Natural killer cell (primary cell): ENCODE measurements at regions of chr12 and their contacts with region 1.

Region 1: DNA sequence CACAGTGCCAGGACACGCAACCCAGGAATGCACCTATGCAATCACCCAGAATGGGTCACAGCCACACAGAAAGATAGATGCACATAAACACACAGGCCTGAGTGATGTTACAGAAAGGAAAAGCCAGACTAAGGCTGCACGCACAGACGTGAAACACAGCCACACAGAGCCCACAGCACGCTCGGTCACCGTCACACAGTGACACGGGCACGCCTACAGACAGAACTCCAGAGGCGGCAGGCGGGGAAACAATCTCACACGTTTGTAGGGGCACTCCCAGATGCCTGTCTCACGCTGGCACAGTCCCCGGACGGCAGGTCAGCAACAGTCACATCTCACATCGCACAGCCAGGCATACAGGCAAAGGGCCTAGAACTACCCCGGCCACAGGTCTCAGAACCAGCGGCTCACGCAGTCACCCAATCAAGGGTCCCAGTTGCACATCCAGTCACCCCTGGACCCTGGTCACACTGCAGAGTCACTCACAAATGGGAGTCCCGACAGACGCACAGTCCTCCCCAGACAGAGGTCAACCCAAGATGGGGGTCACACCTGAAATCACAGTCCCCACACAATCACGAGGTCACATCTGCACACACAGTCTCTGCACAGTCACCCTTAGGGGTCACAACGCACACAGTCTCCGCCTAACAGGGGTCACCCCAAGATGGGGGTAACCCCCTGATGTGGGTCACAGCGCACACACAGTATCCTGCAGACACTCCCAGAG is 790 bp downstream of the SSH1 start:
- DNase-seq: peak; percentile 70 to 88
- ATAC-seq: peak; percentile 64 to 79 (median 66)
- H3K4me3 ChIP-seq: peak overlapping the region; percentile 73
- H3K4me3 Mint-ChIP-seq: peak overlapping the region; percentile 94
- H3K27ac ChIP-seq: peak overlapping the region; percentile 75
- H3K27ac Mint-ChIP-seq: peak overlapping the region; percentile 96
- H3K4me1 ChIP-seq: peaks cover 40% of the 10 kb centered on the region
- H3K4me1 Mint-ChIP-seq: peaks cover 49 to 54% of the 10 kb centered on the region in 2 donors
- H3K27me3 ChIP-seq: no peaks in the 10 kb centered on the region
- H3K27me3 Mint-ChIP-seq: no peaks in the 10 kb centered on the region
- CTCF ChIP-seq: no peak

Region 2: GRCh38 chr12:108618079-108618952 is 238.3 kb before region 1 on chr12:
- intact Hi-C with region 1: no loop called
- DNase-seq: peak; percentile 76 to 89
- ATAC-seq: peak; percentile 39 to 65 (median 45)
- H3K4me3 ChIP-seq: no peak overlapping the region
- H3K4me3 Mint-ChIP-seq: peak overlapping the region; percentile 56
- H3K27ac ChIP-seq: peak overlapping the region; percentile 79
- H3K27ac Mint-ChIP-seq: peak overlapping the region; percentile 92 to 100
- H3K4me1 ChIP-seq: peaks cover 56% of the 10 kb centered on the region
- H3K4me1 Mint-ChIP-seq: peaks cover 68 to 70% of the 10 kb centered on the region in 2 donors
- H3K27me3 ChIP-seq: no peaks in the 10 kb centered on the region
- H3K27me3 Mint-ChIP-seq: no peaks in the 10 kb centered on the region
- CTCF ChIP-seq: peak; percentile 98

Region 3: GRCh38 chr12:108653082-108653516 is 203.5 kb before region 1 on chr12:
- intact Hi-C with region 1: no loop called
- DNase-seq: no peak
- ATAC-seq: no peak
- H3K4me3 ChIP-seq: no peak overlapping the region
- H3K4me3 Mint-ChIP-seq: no peak overlapping the region
- H3K27ac ChIP-seq: no peak overlapping the region
- H3K27ac Mint-ChIP-seq: no peak overlapping the region
- H3K4me1 ChIP-seq: no peaks in the 10 kb centered on the region
- H3K4me1 Mint-ChIP-seq: peaks cover 0 to under 1% of the 10 kb centered on the region in 2 donors
- H3K27me3 ChIP-seq: no peaks in the 10 kb centered on the region
- H3K27me3 Mint-ChIP-seq: no peaks in the 10 kb centered on the region
- CTCF ChIP-seq: no peak

Region 4: DNA sequence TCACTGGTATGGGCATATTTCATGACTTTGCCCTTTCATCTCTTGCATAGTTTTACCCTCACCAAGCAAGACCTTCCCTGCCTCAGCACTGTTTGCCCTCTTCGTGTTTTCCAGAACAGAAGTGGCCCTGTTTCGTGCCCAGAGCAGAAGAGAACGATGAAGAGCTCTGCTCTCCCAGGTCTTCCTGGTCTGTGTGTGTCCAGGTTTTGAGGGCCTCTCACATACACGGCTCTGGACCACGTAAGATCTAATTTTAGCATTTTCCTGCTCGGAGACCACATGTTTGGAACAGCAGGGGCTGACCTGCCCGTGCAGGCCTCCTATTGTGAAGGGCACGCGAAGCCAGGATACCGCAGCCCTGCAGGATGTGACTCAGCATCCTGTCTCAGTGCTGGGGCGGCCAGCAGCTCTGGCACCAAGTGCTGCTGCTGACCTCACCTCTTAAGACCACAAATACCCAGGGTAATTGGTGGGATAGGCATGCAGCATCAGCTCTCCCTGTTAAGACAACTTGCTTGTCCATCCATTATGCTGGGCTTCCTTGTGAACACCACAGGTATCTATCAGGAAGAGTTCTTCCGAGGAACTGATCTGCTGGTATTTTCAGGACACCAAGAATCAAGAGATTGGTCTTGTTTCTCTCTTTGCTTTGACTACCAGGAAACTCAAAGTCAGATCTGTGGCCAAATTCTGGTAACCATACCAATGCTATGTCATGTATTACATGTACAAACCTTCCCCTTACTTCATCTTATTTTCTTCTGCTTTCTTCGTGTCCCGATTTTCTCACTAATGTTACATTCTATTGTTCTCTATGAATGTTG is 18.2 kb before region 1 on chr12:
- intact Hi-C with region 1: loop called (anchors 2 kb)
- DNase-seq: peak; percentile 81 to 83
- ATAC-seq: peak; percentile 91 to 97 (median 96)
- H3K4me3 ChIP-seq: no peak overlapping the region
- H3K4me3 Mint-ChIP-seq: peak overlapping the region; percentile 80
- H3K27ac ChIP-seq: peak overlapping the region; percentile 90
- H3K27ac Mint-ChIP-seq: peak overlapping the region; percentile 98 to 99
- H3K4me1 ChIP-seq: peaks cover 39% of the 10 kb centered on the region
- H3K4me1 Mint-ChIP-seq: peaks cover 74 to 75% of the 10 kb centered on the region in 2 donors
- H3K27me3 ChIP-seq: no peaks in the 10 kb centered on the region
- H3K27me3 Mint-ChIP-seq: no peaks in the 10 kb centered on the region
- CTCF ChIP-seq: no peak

Region 5: DNA sequence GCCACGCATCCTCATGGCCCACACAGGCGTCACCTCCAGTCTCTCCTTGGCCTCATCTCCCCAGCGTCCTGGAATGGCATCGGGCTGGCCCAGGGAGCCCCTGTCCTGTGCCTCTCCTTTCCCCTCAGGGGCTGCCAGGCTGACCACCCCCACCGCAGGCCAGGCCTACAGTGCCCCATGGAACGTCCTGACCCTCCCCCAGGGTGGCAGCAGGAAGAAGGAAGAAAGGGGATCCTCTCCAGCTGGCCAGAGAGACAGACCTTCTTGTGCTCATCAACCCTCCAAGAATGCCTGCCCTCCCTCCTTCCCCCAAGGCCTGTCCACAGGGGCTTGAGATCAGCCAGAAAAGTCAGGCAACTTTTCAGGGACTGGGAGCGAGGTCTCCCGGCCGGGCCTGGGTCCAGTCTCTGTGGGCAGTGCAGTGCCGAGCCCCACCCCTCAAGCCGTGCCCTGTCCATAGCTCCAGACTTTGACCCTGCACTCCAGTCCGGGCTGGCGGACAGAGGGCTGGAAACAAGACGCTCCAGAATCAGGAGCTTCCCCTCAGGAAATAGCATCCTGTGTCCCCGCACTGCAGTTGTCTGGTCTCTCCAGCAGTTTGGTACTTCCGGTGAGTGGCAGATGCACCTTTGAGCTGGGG is 23.1 kb after region 1 on chr12 and contains the start of gene DAO:
- intact Hi-C with region 1: no loop called
- DNase-seq: no peak
- ATAC-seq: no peak
- H3K4me3 ChIP-seq: no peak within 1 kb of the TSS
- H3K4me3 Mint-ChIP-seq: no peak within 1 kb of the TSS
- H3K27ac ChIP-seq: no peak within 1 kb of the TSS
- H3K27ac Mint-ChIP-seq: no peak within 1 kb of the TSS
- H3K4me1 ChIP-seq: peaks cover 8% of the 10 kb centered on the region
- H3K4me1 Mint-ChIP-seq: peaks cover 0 to 7% of the 10 kb centered on the region in 2 donors
- H3K27me3 ChIP-seq: no peaks in the 10 kb centered on the region
- H3K27me3 Mint-ChIP-seq: no peaks in the 10 kb centered on the region
- CTCF ChIP-seq: no peak
- total RNA-seq, gene DAO: not detected

Region 6: DNA sequence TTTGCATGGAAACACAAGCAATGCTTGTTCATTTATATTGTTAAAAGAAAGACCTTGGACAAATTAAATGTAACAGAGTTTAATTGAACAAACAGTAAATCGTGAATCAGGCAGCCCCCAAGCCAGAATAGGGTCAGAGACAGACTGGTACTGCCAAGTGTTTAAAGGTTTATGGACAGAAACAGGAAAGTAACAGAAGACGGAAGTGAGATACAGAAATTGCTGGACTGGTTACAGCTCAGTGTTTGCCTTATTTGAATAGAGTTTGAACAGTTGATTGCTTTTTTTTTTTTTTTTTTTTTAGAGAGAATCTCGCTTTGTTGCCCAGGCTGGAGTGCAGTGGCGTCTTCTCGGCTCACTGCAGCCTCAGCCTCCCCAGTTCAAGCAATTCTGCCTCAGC is 73.6 kb after region 1 on chr12:
- intact Hi-C with region 1: no loop called
- DNase-seq: no peak
- ATAC-seq: no peak
- H3K4me3 ChIP-seq: no peak overlapping the region
- H3K4me3 Mint-ChIP-seq: no peak overlapping the region
- H3K27ac ChIP-seq: no peak overlapping the region
- H3K27ac Mint-ChIP-seq: no peak overlapping the region
- H3K4me1 ChIP-seq: no peaks in the 10 kb centered on the region
- H3K4me1 Mint-ChIP-seq: no peaks in the 10 kb centered on the region
- H3K27me3 ChIP-seq: no peaks in the 10 kb centered on the region
- H3K27me3 Mint-ChIP-seq: peaks cover 0 to 3% of the 10 kb centered on the region in 2 donors
- CTCF ChIP-seq: no peak